Activated T-helper 2 cell treated with anti-CD3 and anti-CD28 coated beads, Interferon-gamma antibody, Interleukin-2, Interleukin-4, amounts not matched to agents 10 μg/mL and 5 μg/mL and 100 μg/mL, durations not matched to agents 14 hours and 24 hours and 36 hours (primary cell): ENCODE measurements at regions of chrX and their contacts with region 1.

Region 1: GRCh38 chrX:119398974-119399771 is at the start of gene SLC25A43:
- DNase-seq: peak; percentile 12
- H3K4me3 Mint-ChIP-seq: peak within 1 kb of the TSS; percentile 87
- H3K27ac Mint-ChIP-seq: peak within 1 kb of the TSS; percentile 78
- H3K4me1 Mint-ChIP-seq: peaks cover 21% of the 10 kb centered on the region
- H3K27me3 Mint-ChIP-seq: peaks cover 2% of the 10 kb centered on the region
- total RNA-seq, gene SLC25A43: 13.4 and 13.6 TPM in 2 replicates

Region 2: DNA sequence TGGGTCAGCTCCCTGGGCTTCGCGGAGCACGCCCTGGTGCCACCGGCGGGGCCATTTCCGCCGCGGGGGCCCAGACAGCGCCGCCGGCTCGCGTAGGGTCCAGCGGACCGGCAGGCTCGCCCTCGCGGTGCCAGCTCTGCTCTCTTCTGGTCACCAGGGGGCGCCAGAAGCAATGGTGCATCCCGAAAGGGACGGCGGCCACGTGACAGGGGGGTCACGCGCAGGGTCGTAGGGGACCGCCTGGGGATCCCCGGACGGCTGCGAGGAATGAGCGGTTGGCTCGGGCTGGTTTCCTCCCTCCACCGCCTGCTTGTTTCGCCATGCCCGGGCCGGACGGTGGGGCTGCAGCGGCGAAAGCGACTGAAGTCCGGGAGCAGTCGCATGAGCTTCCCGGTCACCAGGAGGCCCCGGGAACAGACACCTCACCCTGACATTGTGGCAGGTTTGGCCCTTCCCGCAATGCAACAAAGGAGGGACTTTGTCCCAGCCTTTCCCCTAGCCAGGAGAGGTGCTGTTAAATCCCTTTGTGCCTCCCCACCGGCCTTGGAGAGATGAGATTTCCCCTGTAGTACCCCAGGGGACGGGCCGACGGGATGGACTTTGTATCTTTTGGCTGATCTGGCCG is 559.7 kb before region 1 on chrX:
- intact Hi-C with region 1: no loop called
- DNase-seq: peak; percentile 16
- H3K4me3 Mint-ChIP-seq: peak overlapping the region; percentile 33
- H3K27ac Mint-ChIP-seq: no peak overlapping the region
- H3K4me1 Mint-ChIP-seq: no peaks in the 10 kb centered on the region
- H3K27me3 Mint-ChIP-seq: peaks cover 11% of the 10 kb centered on the region

Region 3: DNA sequence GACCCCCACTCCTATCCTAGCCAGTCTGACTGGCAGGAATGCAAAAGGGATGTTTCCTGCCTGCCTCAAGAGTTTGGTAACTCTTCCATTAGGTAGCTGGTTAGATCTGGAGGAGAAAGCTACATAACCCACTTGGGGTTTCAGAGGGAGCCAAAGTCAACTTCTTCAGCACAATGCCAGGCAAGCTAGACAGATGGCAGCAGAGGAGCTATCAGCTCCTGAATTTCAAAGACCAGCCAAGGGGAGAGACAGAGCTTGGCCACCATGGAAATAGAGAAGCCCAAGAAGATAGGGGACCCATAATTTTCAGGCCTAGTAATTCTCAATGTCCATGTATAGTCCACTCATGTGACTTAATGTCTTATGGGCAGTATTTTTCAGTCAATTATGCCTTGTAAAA is 106.7 kb before region 1 on chrX:
- intact Hi-C with region 1: no loop called
- DNase-seq: no peak
- H3K4me3 Mint-ChIP-seq: no peak overlapping the region
- H3K27ac Mint-ChIP-seq: no peak overlapping the region
- H3K4me1 Mint-ChIP-seq: no peaks in the 10 kb centered on the region
- H3K27me3 Mint-ChIP-seq: peaks cover 9% of the 10 kb centered on the region

Region 4: GRCh38 chrX:119325456-119325855 is 73.7 kb before region 1 on chrX:
- intact Hi-C with region 1: no loop called
- DNase-seq: no peak
- H3K4me3 Mint-ChIP-seq: no peak overlapping the region
- H3K27ac Mint-ChIP-seq: no peak overlapping the region
- H3K4me1 Mint-ChIP-seq: no peaks in the 10 kb centered on the region
- H3K27me3 Mint-ChIP-seq: no peaks in the 10 kb centered on the region

Region 5: DNA sequence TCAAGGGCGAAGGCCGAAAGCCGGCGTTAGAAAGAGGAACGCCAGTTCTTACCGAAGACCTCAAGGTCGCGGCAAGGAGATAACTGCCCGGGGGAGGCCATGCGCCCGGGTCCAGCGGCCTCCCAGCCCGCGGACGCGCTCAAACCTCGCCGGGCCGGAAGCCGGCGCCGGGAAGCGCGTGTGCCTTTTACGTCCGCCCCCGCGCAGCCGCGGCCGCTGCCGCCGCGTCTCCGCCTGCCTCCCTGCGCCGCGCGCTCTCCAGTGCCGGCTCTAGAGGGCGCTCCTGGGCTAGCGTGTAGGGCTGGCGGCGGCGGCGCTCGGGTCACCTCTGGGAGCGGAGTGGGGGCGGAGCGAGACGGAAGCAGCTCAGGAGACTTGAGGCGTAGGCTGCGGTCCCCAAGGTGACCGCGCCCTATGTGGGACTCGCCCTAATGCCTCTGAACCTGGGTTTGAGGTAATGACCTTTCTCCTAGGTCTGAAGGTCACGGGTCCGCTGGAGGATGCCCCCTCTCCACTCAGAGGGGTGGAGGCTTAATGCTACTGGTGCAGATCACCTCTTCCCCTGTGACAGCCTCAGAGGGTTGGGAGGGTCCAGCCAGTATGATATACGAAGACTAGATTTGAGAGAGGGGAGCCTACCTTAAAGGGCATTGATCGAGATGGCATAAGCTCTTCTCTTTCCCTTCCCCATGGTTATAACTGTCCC is 69.9 kb after region 1 on chrX:
- intact Hi-C with region 1: loop called (anchors 2 kb)
- DNase-seq: peak; percentile 84
- H3K4me3 Mint-ChIP-seq: peak overlapping the region; percentile 88
- H3K27ac Mint-ChIP-seq: peak overlapping the region; percentile 90
- H3K4me1 Mint-ChIP-seq: peaks cover 8% of the 10 kb centered on the region
- H3K27me3 Mint-ChIP-seq: no peaks in the 10 kb centered on the region